B cell (primary cell): ENCODE measurements at regions of chr3 and their contacts with region 1.

Region 1: DNA sequence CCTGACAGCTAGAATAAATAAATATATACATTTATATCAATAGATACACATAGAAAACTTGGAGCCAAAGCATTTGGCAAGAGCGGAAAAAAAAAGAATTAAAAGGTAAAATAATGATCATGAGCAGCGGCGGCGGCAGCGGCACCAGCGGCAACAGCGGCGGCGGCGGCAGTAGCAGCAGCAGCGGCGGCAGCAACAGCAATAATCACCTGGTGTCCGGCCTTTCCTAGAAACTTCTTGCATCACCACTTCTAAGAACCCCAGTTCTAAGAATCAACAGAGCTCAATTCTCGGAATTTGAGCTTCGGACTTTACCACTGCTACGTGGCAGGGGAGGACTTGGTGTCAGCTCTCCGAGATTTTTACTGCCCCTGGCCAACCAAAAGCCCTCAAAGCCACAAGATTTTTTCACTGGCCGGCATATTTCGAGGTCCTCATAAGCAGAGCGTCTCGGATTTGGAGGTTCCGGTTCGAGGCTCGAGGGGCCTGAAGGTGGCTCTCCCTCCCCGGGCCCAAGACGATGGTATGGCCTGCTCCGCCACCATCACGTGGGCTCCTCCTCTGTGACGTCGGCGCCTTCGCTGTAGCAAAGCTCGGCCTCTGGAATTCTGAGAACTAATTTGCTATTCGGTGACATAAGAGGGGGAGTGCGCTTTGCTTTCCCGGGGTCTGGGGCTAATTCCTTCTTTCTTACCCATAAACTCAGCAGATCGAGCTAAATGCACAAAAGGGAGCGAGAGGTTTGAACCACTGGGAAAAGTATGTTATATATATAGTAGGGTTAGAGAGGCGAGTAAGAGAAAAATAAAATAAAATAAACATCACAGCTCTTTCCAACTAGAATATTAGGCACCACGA is at the start of gene BCL6:
- DNase-seq: peak; percentile 97
- ATAC-seq: peak; percentile 60
- H3K4me3 ChIP-seq: peak within 1 kb of the TSS; percentile 67 to 96 (median 84)
- H3K4me3 Mint-ChIP-seq: peak within 1 kb of the TSS; percentile 97
- H3K27ac ChIP-seq: peak within 1 kb of the TSS; percentile 88 to 96
- H3K27ac Mint-ChIP-seq: peak within 1 kb of the TSS; percentile 96
- H3K4me1 ChIP-seq: peaks cover 38 to 52% of the 10 kb centered on the region in 2 donors
- H3K4me1 Mint-ChIP-seq: peaks cover 74% of the 10 kb centered on the region
- H3K27me3 ChIP-seq: no peaks in the 10 kb centered on the region
- H3K27me3 Mint-ChIP-seq: no peaks in the 10 kb centered on the region
- CTCF ChIP-seq: no peak
- total RNA-seq, gene BCL6: 48.2 and 55.5 TPM in 2 replicates

Region 2: DNA sequence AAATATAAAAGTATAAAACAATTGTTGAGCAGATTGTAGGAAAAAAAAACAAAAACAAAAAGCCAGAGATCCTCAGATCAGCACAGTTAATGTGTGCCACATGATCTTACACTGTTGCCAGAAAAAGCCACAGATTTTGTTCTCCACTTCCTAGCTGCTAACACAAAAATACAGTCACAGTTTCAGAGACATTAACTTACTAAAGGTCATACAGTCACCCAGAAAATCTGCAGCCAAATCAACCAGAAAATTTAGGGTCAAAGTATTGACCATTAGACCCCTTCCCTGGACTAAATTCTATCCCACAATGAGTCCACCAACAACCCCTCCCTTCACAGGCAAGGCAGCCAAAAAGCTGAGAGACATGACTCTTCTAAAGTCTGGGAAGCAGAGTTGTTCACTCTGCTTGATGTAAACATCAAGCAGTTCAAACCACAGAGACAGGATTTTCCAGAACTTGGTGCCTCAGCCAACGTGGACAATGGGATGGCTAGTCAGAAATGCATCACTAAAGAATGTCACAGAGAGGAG is 134.4 kb before region 1 on chr3:
- CTCF ChIA-PET with region 1: no interaction called
- POLR2A ChIA-PET with region 1: no interaction called
- intact Hi-C with region 1: no loop called
- DNase-seq: no peak
- ATAC-seq: no peak
- H3K4me3 ChIP-seq: no peak overlapping the region
- H3K4me3 Mint-ChIP-seq: no peak overlapping the region
- H3K27ac ChIP-seq: no peak overlapping the region
- H3K27ac Mint-ChIP-seq: no peak overlapping the region
- H3K4me1 ChIP-seq: no peaks in the 10 kb centered on the region
- H3K4me1 Mint-ChIP-seq: no peaks in the 10 kb centered on the region
- H3K27me3 ChIP-seq: peaks cover 0 to 17% (median 7%) of the 10 kb centered on the region in 4 experiments
- H3K27me3 Mint-ChIP-seq: peaks cover 59% of the 10 kb centered on the region
- CTCF ChIP-seq: no peak

Region 3: GRCh38 chr3:187777331-187777941 is 32.0 kb after region 1 on chr3:
- CTCF ChIA-PET with region 1: interaction called, 8 read pairs
- POLR2A ChIA-PET with region 1: interaction called, 4 read pairs
- intact Hi-C with region 1: loop called (anchors 1 kb)
- DNase-seq: peak; percentile 78
- ATAC-seq: peak; percentile 80
- H3K4me3 ChIP-seq: no peak overlapping the region
- H3K4me3 Mint-ChIP-seq: peak overlapping the region; percentile 62
- H3K27ac ChIP-seq: peak overlapping the region in 1 of 2 donors; percentile 6
- H3K27ac Mint-ChIP-seq: peak overlapping the region; percentile 89
- H3K4me1 ChIP-seq: peaks cover 29 to 35% of the 10 kb centered on the region in 2 donors
- H3K4me1 Mint-ChIP-seq: peaks cover 33% of the 10 kb centered on the region
- H3K27me3 ChIP-seq: no peaks in the 10 kb centered on the region
- H3K27me3 Mint-ChIP-seq: no peaks in the 10 kb centered on the region
- CTCF ChIP-seq: no peak

Region 4: DNA sequence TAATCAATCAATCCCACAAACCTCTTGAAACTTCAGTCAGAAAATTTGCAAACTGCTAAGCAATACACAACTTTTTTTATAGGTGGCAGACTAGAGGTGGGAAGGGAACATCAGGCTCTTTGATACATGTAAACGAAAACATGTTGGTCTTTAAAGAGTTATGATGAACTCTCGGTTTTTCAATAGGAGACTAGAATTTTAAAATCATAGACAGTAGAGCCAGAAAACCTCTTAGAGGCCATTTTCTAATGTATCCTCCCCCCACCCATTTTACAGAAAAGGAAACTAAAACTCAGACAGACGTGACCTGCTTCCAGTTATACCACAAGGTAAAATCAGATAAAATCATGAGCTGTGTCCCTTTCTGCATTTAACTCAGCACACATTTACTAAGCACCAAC is 229.4 kb after region 1 on chr3:
- CTCF ChIA-PET with region 1: interaction called, 61 read pairs
- POLR2A ChIA-PET with region 1: interaction called, 6 read pairs
- intact Hi-C with region 1: loop called (anchors 1 kb)
- DNase-seq: peak; percentile 56
- ATAC-seq: no peak
- H3K4me3 ChIP-seq: peak overlapping the region in 3 of 5 experiments; percentile 29 to 51 (median 34)
- H3K4me3 Mint-ChIP-seq: peak overlapping the region; percentile 81
- H3K27ac ChIP-seq: no peak overlapping the region
- H3K27ac Mint-ChIP-seq: peak overlapping the region; percentile 73
- H3K4me1 ChIP-seq: peaks cover 51 to 57% of the 10 kb centered on the region in 2 donors
- H3K4me1 Mint-ChIP-seq: peaks cover 65% of the 10 kb centered on the region
- H3K27me3 ChIP-seq: peaks cover 0 to 14% (median 5%) of the 10 kb centered on the region in 4 experiments
- H3K27me3 Mint-ChIP-seq: peaks cover 26% of the 10 kb centered on the region
- CTCF ChIP-seq: peak; percentile 22

Region 5: DNA sequence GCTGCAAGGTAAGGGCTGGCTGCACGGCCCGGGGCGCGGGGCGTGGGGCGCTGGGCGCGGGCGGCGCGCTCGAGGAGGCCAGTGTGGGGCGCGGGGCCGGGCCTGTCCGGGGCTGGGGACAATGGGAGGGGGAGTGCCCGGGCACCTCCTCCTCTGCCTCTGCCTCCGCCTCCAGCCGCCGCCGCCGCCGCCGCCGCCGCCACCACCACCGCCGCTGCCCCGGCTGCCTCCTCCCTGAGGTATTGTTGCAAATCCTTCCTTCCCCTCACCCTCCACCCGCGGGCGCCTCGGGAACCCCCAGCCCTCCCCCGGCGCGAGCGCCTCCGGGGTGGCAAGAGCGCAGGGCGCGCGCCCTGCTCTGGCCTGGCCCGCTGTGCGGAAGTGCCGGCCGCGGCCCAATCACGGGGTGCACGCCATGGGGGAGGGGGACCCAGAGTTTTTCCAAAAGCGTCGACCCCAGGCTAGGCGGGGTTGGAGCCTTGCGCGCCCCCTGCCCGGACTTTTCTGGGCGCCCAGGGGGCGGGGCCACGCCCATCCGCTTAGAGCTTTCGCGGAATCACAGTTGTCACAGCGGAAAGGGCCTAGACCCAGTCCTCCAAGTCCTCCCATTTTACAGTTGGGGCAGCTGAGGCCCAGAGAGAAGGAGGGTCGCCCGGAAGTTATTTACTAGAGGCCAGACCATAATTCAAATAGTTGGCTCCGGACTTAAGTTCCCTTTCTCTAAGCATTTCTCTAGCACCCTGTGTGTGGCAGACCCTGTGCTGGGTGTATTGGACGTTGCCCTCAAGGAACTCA is 408.8 kb after region 1 on chr3 and contains the start of gene LPP:
- CTCF ChIA-PET with region 1: interaction called, 10 read pairs
- POLR2A ChIA-PET with region 1: interaction called, 4 read pairs
- intact Hi-C with region 1: loop called (anchors 1 kb)
- DNase-seq: peak; percentile 94
- ATAC-seq: peak; percentile 87
- H3K4me3 ChIP-seq: peak within 1 kb of the TSS; percentile 80 to 97 (median 93)
- H3K4me3 Mint-ChIP-seq: peak within 1 kb of the TSS; percentile 95
- H3K27ac ChIP-seq: peak within 1 kb of the TSS; percentile 88 to 91
- H3K27ac Mint-ChIP-seq: peak within 1 kb of the TSS; percentile 95
- H3K4me1 ChIP-seq: peaks cover 18 to 27% of the 10 kb centered on the region in 2 donors
- H3K4me1 Mint-ChIP-seq: peaks cover 51% of the 10 kb centered on the region
- H3K27me3 ChIP-seq: no peaks in the 10 kb centered on the region
- H3K27me3 Mint-ChIP-seq: no peaks in the 10 kb centered on the region
- CTCF ChIP-seq: peak; percentile 19
- total RNA-seq, gene LPP: 81.7 and 94.5 TPM in 2 replicates

Region 6: GRCh38 chr3:188279502-188280335 is 534.3 kb after region 1 on chr3:
- CTCF ChIA-PET with region 1: interaction called, 19 read pairs
- POLR2A ChIA-PET with region 1: no interaction called
- intact Hi-C with region 1: loop called (anchors 5 kb)
- DNase-seq: no peak
- ATAC-seq: no peak
- H3K4me3 ChIP-seq: no peak overlapping the region
- H3K4me3 Mint-ChIP-seq: no peak overlapping the region
- H3K27ac ChIP-seq: no peak overlapping the region
- H3K27ac Mint-ChIP-seq: no peak overlapping the region
- H3K4me1 ChIP-seq: peaks cover 6 to 8% of the 10 kb centered on the region in 2 donors
- H3K4me1 Mint-ChIP-seq: peaks cover 29% of the 10 kb centered on the region
- H3K27me3 ChIP-seq: no peaks in the 10 kb centered on the region
- H3K27me3 Mint-ChIP-seq: no peaks in the 10 kb centered on the region
- CTCF ChIP-seq: no peak

Region 7: GRCh38 chr3:188439080-188439479 is 693.6 kb after region 1 on chr3:
- CTCF ChIA-PET with region 1: interaction called, 6 read pairs
- POLR2A ChIA-PET with region 1: no interaction called
- intact Hi-C with region 1: loop called (anchors 1 kb)
- DNase-seq: peak; percentile 88
- ATAC-seq: peak; percentile 90
- H3K4me3 ChIP-seq: peak overlapping the region in 1 of 5 experiments; percentile 27
- H3K4me3 Mint-ChIP-seq: peak overlapping the region; percentile 44
- H3K27ac ChIP-seq: peak overlapping the region; percentile 93 to 96
- H3K27ac Mint-ChIP-seq: peak overlapping the region; percentile 92
- H3K4me1 ChIP-seq: peaks cover 71 to 80% of the 10 kb centered on the region in 2 donors
- H3K4me1 Mint-ChIP-seq: peaks cover 82% of the 10 kb centered on the region
- H3K27me3 ChIP-seq: no peaks in the 10 kb centered on the region
- H3K27me3 Mint-ChIP-seq: no peaks in the 10 kb centered on the region
- CTCF ChIP-seq: no peak

Region 8: GRCh38 chr3:188749010-188749617 is 1003.7 kb after region 1 on chr3:
- CTCF ChIA-PET with region 1: interaction called, 111 read pairs
- POLR2A ChIA-PET with region 1: interaction called, 3 read pairs
- intact Hi-C with region 1: loop called (anchors 1 kb)
- DNase-seq: peak; percentile 65
- ATAC-seq: no peak
- H3K4me3 ChIP-seq: no peak overlapping the region
- H3K4me3 Mint-ChIP-seq: no peak overlapping the region
- H3K27ac ChIP-seq: no peak overlapping the region
- H3K27ac Mint-ChIP-seq: no peak overlapping the region
- H3K4me1 ChIP-seq: peaks cover 18 to 20% of the 10 kb centered on the region in 2 donors
- H3K4me1 Mint-ChIP-seq: peaks cover 22% of the 10 kb centered on the region
- H3K27me3 ChIP-seq: no peaks in the 10 kb centered on the region
- H3K27me3 Mint-ChIP-seq: no peaks in the 10 kb centered on the region
- CTCF ChIP-seq: peak; percentile 76